Activated naive CD8-positive, alpha-beta T cell treated with anti-CD3 and anti-CD28 coated beads, Interleukin-2, amount 10 ng/mL, durations not matched to agents 7 days and 5 days (primary cell): ENCODE measurements at regions of chr6 and their contacts with region 1.

Region 1: DNA sequence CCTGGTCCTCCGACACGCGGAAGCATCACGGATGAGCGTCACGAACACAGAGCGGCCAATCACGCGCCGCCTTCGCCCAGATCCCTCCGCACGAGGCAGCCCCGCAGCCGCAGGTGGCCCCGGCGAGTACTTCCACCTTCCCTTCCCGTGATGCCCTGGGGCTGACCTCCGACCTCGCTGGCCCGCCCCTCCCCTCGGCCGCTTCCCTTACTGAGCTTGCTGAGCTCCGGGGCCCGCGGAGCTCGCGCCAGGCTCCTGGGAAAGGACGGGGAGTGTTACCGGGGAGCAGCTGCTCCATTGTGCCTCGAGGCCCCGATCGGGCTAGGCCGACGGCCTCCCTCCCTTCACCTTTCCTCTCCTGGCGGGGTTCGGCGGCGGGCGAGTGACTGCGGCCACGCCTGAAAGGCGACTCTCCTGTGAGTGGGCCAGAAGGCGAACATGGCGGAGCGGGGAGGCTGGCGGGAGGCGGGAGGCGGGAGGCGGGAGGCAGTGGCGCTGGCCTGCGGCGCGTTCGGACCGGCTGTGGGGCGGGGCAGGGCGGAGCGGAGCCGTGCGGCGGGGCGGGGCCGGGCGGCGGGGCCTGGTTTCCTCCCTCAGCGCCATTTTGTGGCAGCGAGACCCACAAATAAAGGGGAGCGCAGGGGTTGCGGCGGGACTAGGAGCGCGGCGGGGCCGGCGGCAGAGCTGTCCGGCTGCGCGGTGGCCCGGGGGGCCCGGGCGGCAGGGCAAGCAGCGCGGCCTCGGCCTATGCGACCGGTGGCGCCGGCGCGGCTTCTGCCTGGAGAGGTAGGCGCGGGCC is at the start of gene WTAP:
- DNase-seq: peak; percentile 95
- ATAC-seq: peak; percentile 78
- H3K4me3 Mint-ChIP-seq: peak within 1 kb of the TSS; percentile 94
- H3K27ac Mint-ChIP-seq: peak within 1 kb of the TSS; percentile 98
- H3K4me1 Mint-ChIP-seq: peaks cover 32% of the 10 kb centered on the region
- H3K27me3 Mint-ChIP-seq: no peaks in the 10 kb centered on the region
- total RNA-seq, gene WTAP: 127 to 129 TPM

Region 2: DNA sequence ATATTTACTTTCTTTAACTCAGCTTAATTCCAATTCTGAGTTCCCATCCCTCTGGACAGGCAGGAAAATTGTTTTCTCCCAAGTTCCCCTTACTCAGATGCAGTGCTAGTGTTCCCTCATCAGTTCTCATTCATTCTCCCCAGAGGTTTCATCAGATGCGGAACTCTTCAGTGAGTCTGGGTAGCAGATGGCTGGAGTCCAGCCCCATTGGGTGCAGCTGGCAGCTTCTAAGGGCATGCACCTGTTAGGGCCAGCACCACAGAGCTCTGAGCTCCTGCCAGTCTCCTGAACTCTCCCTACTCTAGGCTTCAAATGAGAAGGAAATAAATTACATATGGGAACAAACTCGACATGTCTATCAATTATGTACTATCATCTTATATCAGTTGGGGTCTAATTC is 110.7 kb before region 1 on chr6:
- POLR2A ChIA-PET with region 1: no interaction called
- DNase-seq: no peak
- ATAC-seq: no peak
- H3K4me3 Mint-ChIP-seq: no peak overlapping the region
- H3K27ac Mint-ChIP-seq: no peak overlapping the region
- H3K4me1 Mint-ChIP-seq: no peaks in the 10 kb centered on the region
- H3K27me3 Mint-ChIP-seq: peaks cover 5% of the 10 kb centered on the region

Region 3: GRCh38 chr6:159693128-159693893 is 33.8 kb before region 1 on chr6 and contains the start of gene SOD2:
- POLR2A ChIA-PET with region 1: interaction called, 46 read pairs
- DNase-seq: peak; percentile 90
- ATAC-seq: peak; percentile 77
- H3K4me3 Mint-ChIP-seq: peak within 1 kb of the TSS; percentile 94
- H3K27ac Mint-ChIP-seq: peak within 1 kb of the TSS; percentile 93
- H3K4me1 Mint-ChIP-seq: peaks cover 36% of the 10 kb centered on the region
- H3K27me3 Mint-ChIP-seq: no peaks in the 10 kb centered on the region
- total RNA-seq, gene SOD2: 68.4 to 72.1 TPM